Activated B cell treated with CpG ODN at 0.5 μM for 24 hours (primary cell): ENCODE measurements at regions of chr1 and their contacts with region 1.

Region 1: GRCh38 chr1:44721485-44722361 is 9.2 kb downstream of the RNU5D-1 start:
- DNase-seq: peak; percentile 61
- ATAC-seq: peak; percentile 80
- H3K4me3 Mint-ChIP-seq: peak overlapping the region; percentile 47
- H3K27ac Mint-ChIP-seq: peak overlapping the region; percentile 99
- H3K4me1 Mint-ChIP-seq: peaks cover 76% of the 10 kb centered on the region
- H3K27me3 Mint-ChIP-seq: no peaks in the 10 kb centered on the region
- CTCF ChIP-seq: no peak

Region 2: DNA sequence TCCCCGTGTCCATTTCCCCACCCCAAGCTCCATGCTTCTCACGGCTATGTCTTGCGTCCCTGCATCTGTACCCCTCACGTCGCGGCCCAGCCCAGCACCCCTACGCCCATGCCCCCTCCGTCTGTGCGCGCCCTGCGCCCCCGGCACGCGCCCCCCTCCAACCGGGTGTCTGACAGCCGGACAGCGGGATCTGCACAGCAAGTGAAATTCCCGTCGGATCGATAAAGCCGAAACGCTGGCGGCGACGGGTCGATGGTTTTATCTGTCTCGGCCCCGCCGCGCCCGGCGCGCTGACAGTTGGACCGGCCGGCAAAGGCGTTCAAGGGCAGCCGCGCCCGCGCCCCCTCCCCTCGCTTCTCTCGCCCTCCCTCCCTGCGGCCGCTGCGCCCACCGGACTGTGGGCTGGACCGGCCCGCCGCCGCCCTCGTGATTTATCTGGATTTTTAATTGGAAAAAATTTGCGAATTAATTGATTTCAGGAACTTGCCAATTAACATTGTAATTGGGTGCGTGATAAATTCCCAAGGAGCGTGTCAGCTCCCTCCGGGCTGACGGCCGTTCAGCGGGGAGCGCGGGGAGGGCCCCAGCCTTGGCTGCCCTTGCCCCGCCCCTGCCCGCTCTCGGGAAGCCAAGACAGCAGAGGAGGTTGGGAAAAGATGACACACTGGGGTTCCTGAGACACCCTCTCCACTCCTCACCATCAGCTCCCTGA is 104.6 kb before region 1 on chr1:
- CTCF ChIA-PET with region 1: no interaction called
- POLR2A ChIA-PET with region 1: no interaction called
- intact Hi-C with region 1: no loop called
- DNase-seq: no peak
- ATAC-seq: no peak
- H3K4me3 Mint-ChIP-seq: no peak overlapping the region
- H3K27ac Mint-ChIP-seq: no peak overlapping the region
- H3K4me1 Mint-ChIP-seq: no peaks in the 10 kb centered on the region
- H3K27me3 Mint-ChIP-seq: no peaks in the 10 kb centered on the region
- CTCF ChIP-seq: no peak

Region 3: GRCh38 chr1:44664730-44665370 is 56.9 kb before region 1 on chr1:
- CTCF ChIA-PET with region 1: interaction called, 3 read pairs
- POLR2A ChIA-PET with region 1: interaction called, 16 read pairs
- intact Hi-C with region 1: no loop called
- DNase-seq: no peak
- ATAC-seq: peak; percentile 69
- H3K4me3 Mint-ChIP-seq: no peak overlapping the region
- H3K27ac Mint-ChIP-seq: peak overlapping the region; percentile 16
- H3K4me1 Mint-ChIP-seq: peaks cover 13% of the 10 kb centered on the region
- H3K27me3 Mint-ChIP-seq: no peaks in the 10 kb centered on the region
- CTCF ChIP-seq: no peak

Region 4: DNA sequence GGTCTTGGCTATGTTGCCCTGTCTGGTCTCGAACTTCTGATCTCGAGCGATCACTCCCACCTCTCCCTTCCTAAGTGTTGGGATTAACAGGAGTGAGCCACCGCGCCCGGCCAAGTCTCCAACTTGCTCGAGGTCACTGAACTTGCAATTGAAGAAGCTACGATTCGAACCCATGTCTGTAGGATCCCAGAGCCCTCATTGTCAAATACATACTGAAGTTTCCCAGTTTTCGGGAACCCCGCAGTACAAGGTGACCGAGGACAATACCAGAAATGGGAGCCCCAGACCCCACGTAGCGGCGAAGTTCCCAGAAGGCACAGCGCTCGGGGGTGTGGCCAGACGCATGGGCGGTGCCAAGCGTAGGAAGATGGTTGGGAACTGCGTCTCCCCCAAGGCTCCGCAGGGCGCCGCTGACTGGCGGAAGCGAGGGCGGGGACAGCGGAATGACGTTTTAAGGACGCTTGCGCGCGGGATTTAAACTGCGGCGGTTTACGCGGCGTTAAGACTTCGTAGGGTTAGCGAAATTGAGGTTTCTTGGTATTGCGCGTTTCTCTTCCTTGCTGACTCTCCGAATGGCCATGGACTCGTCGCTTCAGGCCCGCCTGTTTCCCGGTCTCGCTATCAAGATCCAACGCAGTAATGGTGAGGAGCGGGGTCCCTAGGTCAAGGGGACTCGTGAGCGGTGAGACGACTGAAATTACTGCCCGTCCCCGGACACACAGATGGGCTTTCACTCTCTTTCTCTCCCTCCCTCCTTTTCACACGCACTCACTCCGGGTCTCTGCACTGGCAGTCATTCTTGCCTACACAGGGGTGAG is 17.8 kb after region 1 on chr1 and contains the start of gene KIF2C:
- CTCF ChIA-PET with region 1: interaction called, 3 read pairs
- POLR2A ChIA-PET with region 1: interaction called, 25 read pairs
- intact Hi-C with region 1: no loop called
- DNase-seq: peak; percentile 94
- ATAC-seq: peak; percentile 100
- H3K4me3 Mint-ChIP-seq: peak within 1 kb of the TSS; percentile 93
- H3K27ac Mint-ChIP-seq: peak within 1 kb of the TSS; percentile 90
- H3K4me1 Mint-ChIP-seq: peaks cover 15% of the 10 kb centered on the region
- H3K27me3 Mint-ChIP-seq: no peaks in the 10 kb centered on the region
- CTCF ChIP-seq: no peak
- total RNA-seq, gene KIF2C: 1.00 and 1.8 TPM in 2 replicates

Region 5: GRCh38 chr1:44807262-44808062 is 85.7 kb after region 1 on chr1 and contains the start of gene DYNLT4:
- CTCF ChIA-PET with region 1: interaction called, 3 read pairs
- POLR2A ChIA-PET with region 1: interaction called, 193 read pairs
- intact Hi-C with region 1: no loop called
- DNase-seq: peak; percentile 67
- ATAC-seq: peak; percentile 32
- H3K4me3 Mint-ChIP-seq: peak within 1 kb of the TSS; percentile 63
- H3K27ac Mint-ChIP-seq: peak within 1 kb of the TSS; percentile 97
- H3K4me1 Mint-ChIP-seq: peaks cover 67% of the 10 kb centered on the region
- H3K27me3 Mint-ChIP-seq: no peaks in the 10 kb centered on the region
- CTCF ChIP-seq: no peak
- total RNA-seq, gene DYNLT4: not detected in 2 replicates

Region 6: DNA sequence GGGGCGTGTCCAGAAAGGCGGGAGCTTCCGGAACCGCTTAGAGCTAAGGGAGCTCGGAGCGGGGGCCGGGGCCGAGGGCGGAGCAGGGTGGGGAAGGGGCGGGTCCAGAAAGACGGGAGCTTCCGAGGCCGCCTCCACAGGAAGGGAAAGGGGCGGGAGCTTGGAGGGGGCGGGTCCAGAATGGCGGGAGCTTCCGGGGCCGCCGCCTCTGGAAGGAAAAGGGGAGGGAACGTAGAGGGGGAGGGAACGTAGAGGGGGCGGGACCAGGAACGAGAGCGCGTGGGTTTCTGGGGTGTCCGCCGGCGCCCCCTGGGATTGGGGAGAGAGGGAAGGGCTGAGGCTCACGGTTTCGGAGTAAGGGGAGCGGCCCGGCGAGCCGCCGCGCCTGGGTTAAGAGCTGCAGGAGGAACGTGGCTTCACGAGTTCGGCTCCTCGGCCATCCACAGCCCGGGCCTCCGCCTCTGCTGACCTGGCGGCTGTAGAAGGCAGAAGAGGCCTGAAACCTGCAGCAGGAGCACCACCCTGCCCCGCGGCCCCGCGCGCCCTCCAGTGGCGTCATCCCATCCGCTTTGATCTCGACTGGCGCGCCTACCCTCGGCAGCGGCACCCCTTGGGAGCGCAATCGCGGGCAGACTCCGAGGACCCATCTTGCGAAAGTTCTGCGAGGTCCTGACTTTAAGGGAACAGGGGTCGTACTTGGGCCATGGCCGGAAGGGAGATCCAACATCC is 582.0 kb after region 1 on chr1:
- CTCF ChIA-PET with region 1: interaction called, 3 read pairs
- POLR2A ChIA-PET with region 1: interaction called, 88 read pairs
- intact Hi-C with region 1: no loop called
- DNase-seq: peak; percentile 91
- ATAC-seq: peak; percentile 80
- H3K4me3 Mint-ChIP-seq: peak overlapping the region; percentile 92
- H3K27ac Mint-ChIP-seq: peak overlapping the region; percentile 96
- H3K4me1 Mint-ChIP-seq: peaks cover 43% of the 10 kb centered on the region
- H3K27me3 Mint-ChIP-seq: no peaks in the 10 kb centered on the region
- CTCF ChIP-seq: no peak

Region 7: GRCh38 chr1:45499415-45499769 is 777.7 kb after region 1 on chr1:
- CTCF ChIA-PET with region 1: no interaction called
- POLR2A ChIA-PET with region 1: interaction called, 12 read pairs
- intact Hi-C with region 1: loop called (anchors 5 kb)
- DNase-seq: no peak
- ATAC-seq: no peak
- H3K4me3 Mint-ChIP-seq: peak overlapping the region; percentile 97
- H3K27ac Mint-ChIP-seq: peak overlapping the region; percentile 88
- H3K4me1 Mint-ChIP-seq: peaks cover 27% of the 10 kb centered on the region
- H3K27me3 Mint-ChIP-seq: no peaks in the 10 kb centered on the region
- CTCF ChIP-seq: no peak

Region 8: GRCh38 chr1:45679123-45679522 is 957.4 kb after region 1 on chr1:
- CTCF ChIA-PET with region 1: no interaction called
- POLR2A ChIA-PET with region 1: interaction called, 12 read pairs
- intact Hi-C with region 1: no loop called
- DNase-seq: no peak
- ATAC-seq: no peak
- H3K4me3 Mint-ChIP-seq: no peak overlapping the region
- H3K27ac Mint-ChIP-seq: no peak overlapping the region
- H3K4me1 Mint-ChIP-seq: peaks cover 77% of the 10 kb centered on the region
- H3K27me3 Mint-ChIP-seq: no peaks in the 10 kb centered on the region
- CTCF ChIP-seq: no peak